BJ (cell line): ENCODE measurements at regions of chr6 and their contacts with region 1.

Region 1: DNA sequence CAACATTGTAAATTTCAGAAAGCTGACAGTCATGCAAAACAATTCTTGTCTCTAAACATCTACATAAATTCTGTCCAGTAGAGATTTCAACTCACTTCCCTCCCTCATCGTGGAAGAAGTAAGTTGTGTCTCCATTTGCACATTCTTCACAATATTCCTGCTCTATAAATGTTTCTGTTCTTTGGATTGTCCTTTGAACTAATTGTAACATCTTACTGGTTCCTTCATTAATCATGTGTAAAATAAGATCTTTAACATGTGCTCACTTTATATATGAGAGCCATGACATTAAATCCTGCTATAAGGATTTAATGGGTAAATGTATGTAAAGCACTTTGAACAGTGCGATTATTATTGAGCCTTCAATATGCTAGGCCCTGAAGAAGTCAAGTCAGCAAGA is 7.0 kb upstream of the LTV1 start:
- DNase-seq: no peak
- H3K4me3 ChIP-seq: no peak overlapping the region
- H3K27me3 ChIP-seq: no peaks in the 10 kb centered on the region
- CTCF ChIP-seq: no peak

Region 2: GRCh38 chr6:143811501-143812157 is 24.5 kb before region 1 on chr6:
- CTCF ChIA-PET with region 1: no interaction called
- POLR2A ChIA-PET with region 1: interaction called, 13 read pairs
- DNase-seq: no peak
- H3K4me3 ChIP-seq: no peak overlapping the region
- H3K27me3 ChIP-seq: no peaks in the 10 kb centered on the region
- CTCF ChIP-seq: no peak